B cell (primary cell): ENCODE measurements at regions of chr9 and their contacts with region 1.

Region 1: GRCh38 chr9:96566498-96567207 is 53.0 kb downstream of the CDC14B start:
- DNase-seq: peak; percentile 89
- ATAC-seq: peak; percentile 91
- H3K4me3 ChIP-seq: peak overlapping the region; percentile 36 to 88 (median 74)
- H3K4me3 Mint-ChIP-seq: peak overlapping the region; percentile 92
- H3K27ac ChIP-seq: peak overlapping the region; percentile 84 to 94
- H3K27ac Mint-ChIP-seq: peak overlapping the region; percentile 92
- H3K4me1 ChIP-seq: peaks cover 11 to 15% of the 10 kb centered on the region in 2 donors
- H3K4me1 Mint-ChIP-seq: peaks cover 18% of the 10 kb centered on the region
- H3K27me3 ChIP-seq: no peaks in the 10 kb centered on the region
- H3K27me3 Mint-ChIP-seq: peaks cover 7% of the 10 kb centered on the region
- CTCF ChIP-seq: peak; percentile 82

Region 2: GRCh38 chr9:96327694-96328352 is 238.8 kb before region 1 on chr9:
- CTCF ChIA-PET with region 1: interaction called, 33 read pairs
- POLR2A ChIA-PET with region 1: interaction called, 4 read pairs
- intact Hi-C with region 1: loop called (anchors 1 kb)
- DNase-seq: peak; percentile 64
- ATAC-seq: peak; percentile 56
- H3K4me3 ChIP-seq: no peak overlapping the region
- H3K4me3 Mint-ChIP-seq: no peak overlapping the region
- H3K27ac ChIP-seq: no peak overlapping the region
- H3K27ac Mint-ChIP-seq: no peak overlapping the region
- H3K4me1 ChIP-seq: no peaks in the 10 kb centered on the region
- H3K4me1 Mint-ChIP-seq: no peaks in the 10 kb centered on the region
- H3K27me3 ChIP-seq: no peaks in the 10 kb centered on the region
- H3K27me3 Mint-ChIP-seq: no peaks in the 10 kb centered on the region
- CTCF ChIP-seq: peak; percentile 91

Region 3: GRCh38 chr9:96532173-96532572 is 34.5 kb before region 1 on chr9:
- CTCF ChIA-PET with region 1: no interaction called
- POLR2A ChIA-PET with region 1: no interaction called
- intact Hi-C with region 1: loop called (anchors 2 kb)
- DNase-seq: no peak
- ATAC-seq: no peak
- H3K4me3 ChIP-seq: no peak overlapping the region
- H3K4me3 Mint-ChIP-seq: no peak overlapping the region
- H3K27ac ChIP-seq: no peak overlapping the region
- H3K27ac Mint-ChIP-seq: no peak overlapping the region
- H3K4me1 ChIP-seq: no peaks in the 10 kb centered on the region
- H3K4me1 Mint-ChIP-seq: no peaks in the 10 kb centered on the region
- H3K27me3 ChIP-seq: no peaks in the 10 kb centered on the region
- H3K27me3 Mint-ChIP-seq: no peaks in the 10 kb centered on the region
- CTCF ChIP-seq: no peak

Region 4: GRCh38 chr9:96686548-96687335 is 120.1 kb after region 1 on chr9:
- CTCF ChIA-PET with region 1: no interaction called
- POLR2A ChIA-PET with region 1: no interaction called
- intact Hi-C with region 1: loop called (anchors 1 kb)
- DNase-seq: peak; percentile 91
- ATAC-seq: peak; percentile 97
- H3K4me3 ChIP-seq: peak overlapping the region; percentile 9 to 72 (median 62)
- H3K4me3 Mint-ChIP-seq: peak overlapping the region; percentile 94
- H3K27ac ChIP-seq: peak overlapping the region; percentile 70 to 83
- H3K27ac Mint-ChIP-seq: peak overlapping the region; percentile 80
- H3K4me1 ChIP-seq: peaks cover 0 to 5% of the 10 kb centered on the region in 2 donors
- H3K4me1 Mint-ChIP-seq: peaks cover 6% of the 10 kb centered on the region
- H3K27me3 ChIP-seq: no peaks in the 10 kb centered on the region
- H3K27me3 Mint-ChIP-seq: no peaks in the 10 kb centered on the region
- CTCF ChIP-seq: peak; percentile 70

Region 5: GRCh38 chr9:97696803-97697601 is 1130.3 kb after region 1 on chr9 and contains the start of gene XPA:
- CTCF ChIA-PET with region 1: no interaction called
- POLR2A ChIA-PET with region 1: no interaction called
- intact Hi-C with region 1: loop called (anchors 5 kb)
- DNase-seq: peak; percentile 97
- ATAC-seq: peak; percentile 92
- H3K4me3 ChIP-seq: peak within 1 kb of the TSS; percentile 67 to 84 (median 74)
- H3K4me3 Mint-ChIP-seq: peak within 1 kb of the TSS; percentile 91
- H3K27ac ChIP-seq: peak within 1 kb of the TSS; percentile 77 to 82
- H3K27ac Mint-ChIP-seq: peak within 1 kb of the TSS; percentile 94
- H3K4me1 ChIP-seq: peaks cover 30 to 40% of the 10 kb centered on the region in 2 donors
- H3K4me1 Mint-ChIP-seq: peaks cover 59% of the 10 kb centered on the region
- H3K27me3 ChIP-seq: no peaks in the 10 kb centered on the region
- H3K27me3 Mint-ChIP-seq: peaks cover 7% of the 10 kb centered on the region
- CTCF ChIP-seq: no peak
- total RNA-seq, gene XPA: 21.3 and 27.4 TPM in 2 replicates